ENCODE measurements at regions of chr1 and their contacts with region 1.

Region 1: DNA sequence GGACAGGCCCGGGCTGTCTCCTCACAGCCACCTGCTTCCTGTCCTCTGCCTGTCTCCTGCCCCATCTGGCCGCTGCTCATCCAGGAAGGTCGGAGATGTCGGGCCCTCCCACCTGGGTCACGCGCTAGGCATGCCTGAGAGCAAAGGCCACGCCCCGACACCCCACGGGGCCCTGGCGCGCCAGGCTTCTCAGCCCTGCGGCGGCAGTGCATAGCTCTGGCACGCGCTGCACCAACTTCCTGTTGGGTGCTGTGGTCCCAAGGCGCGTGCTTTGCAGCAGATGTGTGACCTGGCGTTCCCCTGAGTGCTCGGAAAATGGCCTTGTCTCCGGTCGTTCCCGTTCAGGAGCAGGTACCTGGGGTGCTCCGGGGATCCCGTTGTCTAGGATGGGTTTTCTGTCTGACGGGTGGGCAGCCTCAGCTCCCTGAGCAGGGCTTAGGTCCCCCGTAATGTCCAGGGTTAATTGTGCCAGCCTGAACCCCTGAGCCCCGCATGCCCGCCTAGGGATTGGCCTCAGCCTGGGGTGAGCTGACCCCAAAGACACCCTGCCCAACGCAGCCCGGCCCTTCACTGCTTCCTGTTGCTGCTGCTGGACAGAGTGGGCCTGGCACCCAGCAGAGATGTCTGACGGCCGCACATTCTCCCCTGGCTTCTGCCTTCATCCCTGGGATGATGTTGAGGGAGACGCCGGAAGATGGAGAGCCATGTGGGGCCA is 19.4 kb upstream of the KCNAB2 start:
- DNase-seq: peak; percentile 91
- ATAC-seq: peak; percentile 79
- H3K4me3 Mint-ChIP-seq: peak overlapping the region; percentile 99
- H3K27ac Mint-ChIP-seq: peak overlapping the region; percentile 99
- H3K4me1 Mint-ChIP-seq: peaks cover 45% of the 10 kb centered on the region
- H3K27me3 Mint-ChIP-seq: no peaks in the 10 kb centered on the region

Region 2: GRCh38 chr1:5779598-5780323 is 246.5 kb before region 1 on chr1:
- POLR2A ChIA-PET with region 1: no interaction called
- DNase-seq: no peak
- ATAC-seq: no peak
- H3K4me3 Mint-ChIP-seq: no peak overlapping the region
- H3K27ac Mint-ChIP-seq: no peak overlapping the region
- H3K4me1 Mint-ChIP-seq: no peaks in the 10 kb centered on the region
- H3K27me3 Mint-ChIP-seq: peaks cover 2% of the 10 kb centered on the region

Region 3: GRCh38 chr1:5992026-5992813 is 34.0 kb before region 1 on chr1 and contains the start of gene NPHP4:
- POLR2A ChIA-PET with region 1: interaction called, 101 read pairs
- DNase-seq: peak; percentile 97
- ATAC-seq: peak; percentile 91
- H3K4me3 Mint-ChIP-seq: peak within 1 kb of the TSS; percentile 97
- H3K27ac Mint-ChIP-seq: peak within 1 kb of the TSS; percentile 95
- H3K4me1 Mint-ChIP-seq: peaks cover 20% of the 10 kb centered on the region
- H3K27me3 Mint-ChIP-seq: no peaks in the 10 kb centered on the region
- total RNA-seq, gene NPHP4: 16.4 to 17.5 TPM

Region 4: GRCh38 chr1:6037338-6037762 is 11.1 kb after region 1 on chr1:
- POLR2A ChIA-PET with region 1: interaction called, 19 read pairs
- DNase-seq: peak; percentile 48
- ATAC-seq: peak; percentile 70
- H3K4me3 Mint-ChIP-seq: peak overlapping the region; percentile 37
- H3K27ac Mint-ChIP-seq: peak overlapping the region; percentile 77
- H3K4me1 Mint-ChIP-seq: peaks cover 48% of the 10 kb centered on the region
- H3K27me3 Mint-ChIP-seq: no peaks in the 10 kb centered on the region

Region 5: DNA sequence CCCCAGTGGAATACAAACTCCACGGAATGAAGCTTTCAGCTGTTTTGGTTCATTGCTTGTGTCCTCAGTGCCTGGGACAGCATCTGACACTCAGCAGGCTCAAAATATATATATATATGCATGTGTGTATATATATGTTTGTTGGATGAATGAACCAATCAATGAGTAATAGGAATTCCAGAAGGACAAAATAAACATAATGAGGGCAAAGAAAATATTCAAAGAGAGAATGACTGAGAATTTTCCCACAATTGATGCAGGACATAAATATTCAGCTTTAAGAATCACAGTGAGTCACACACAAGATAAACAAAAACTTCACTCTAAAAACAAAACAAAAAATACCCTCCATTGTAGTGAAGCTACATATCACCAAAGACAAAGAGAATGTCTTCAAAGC is 89.9 kb after region 1 on chr1:
- POLR2A ChIA-PET with region 1: no interaction called
- DNase-seq: no peak
- ATAC-seq: no peak
- H3K4me3 Mint-ChIP-seq: no peak overlapping the region
- H3K27ac Mint-ChIP-seq: no peak overlapping the region
- H3K4me1 Mint-ChIP-seq: no peaks in the 10 kb centered on the region
- H3K27me3 Mint-ChIP-seq: peaks cover 9% of the 10 kb centered on the region

Measured in activated naive CD8-positive, alpha-beta T cell treated with anti-CD3 and anti-CD28 coated beads, Interleukin-2, amount 10 ng/mL, durations not matched to agents 7 days and 5 days (primary cell).